CD14-positive monocyte (primary cell): ENCODE measurements at regions of chr19 and their contacts with region 1.

Region 1: GRCh38 chr19:55624109-55625003 is at the start of gene ZNF784:
- DNase-seq: peak; percentile 88 to 94 (median 91)
- H3K4me3 ChIP-seq: peak within 1 kb of the TSS; percentile 54 to 85 (median 63)
- H3K4me3 Mint-ChIP-seq: peak within 1 kb of the TSS; percentile 85 to 94
- H3K27ac ChIP-seq: peak within 1 kb of the TSS; percentile 78 to 86
- H3K27ac Mint-ChIP-seq: peak within 1 kb of the TSS; percentile 91 to 99 (median 98)
- H3K4me1 ChIP-seq: peaks cover 45 to 54% of the 10 kb centered on the region in 2 donors
- H3K4me1 Mint-ChIP-seq: peaks cover 40% of the 10 kb centered on the region
- H3K27me3 ChIP-seq: no peaks in the 10 kb centered on the region
- H3K27me3 Mint-ChIP-seq: peaks cover 0 to 8% (median 1%) of the 10 kb centered on the region in 3 donors
- CTCF ChIP-seq: no peak
- polyA plus RNA-seq, gene ZNF784: 1.5 to 5.5 (median 2.4) TPM

Region 2: GRCh38 chr19:55553217-55554182 is 70.9 kb before region 1 on chr19:
- intact Hi-C with region 1: no loop called
- DNase-seq: no peak
- H3K4me3 ChIP-seq: no peak overlapping the region
- H3K4me3 Mint-ChIP-seq: peak overlapping the region in 1 of 2 donors; percentile 7
- H3K27ac ChIP-seq: no peak overlapping the region
- H3K27ac Mint-ChIP-seq: no peak overlapping the region
- H3K4me1 ChIP-seq: no peaks in the 10 kb centered on the region
- H3K4me1 Mint-ChIP-seq: peaks cover 2% of the 10 kb centered on the region
- H3K27me3 ChIP-seq: no peaks in the 10 kb centered on the region
- H3K27me3 Mint-ChIP-seq: peaks cover 2 to 9% (median 7%) of the 10 kb centered on the region in 3 donors
- CTCF ChIP-seq: no peak

Region 3: GRCh38 chr19:55586976-55587668 is 37.2 kb before region 1 on chr19:
- intact Hi-C with region 1: loop called in 1 of 2 experiments (anchors 5 kb)
- DNase-seq: peak; percentile 84 to 85 (median 84)
- H3K4me3 ChIP-seq: peak overlapping the region in 2 of 3 experiments; percentile 24 to 75
- H3K4me3 Mint-ChIP-seq: peak overlapping the region; percentile 76 to 92
- H3K27ac ChIP-seq: no peak overlapping the region
- H3K27ac Mint-ChIP-seq: peak overlapping the region in 2 of 7 donors; percentile 45 to 50
- H3K4me1 ChIP-seq: peaks cover 10 to 21% of the 10 kb centered on the region in 2 donors
- H3K4me1 Mint-ChIP-seq: peaks cover 20% of the 10 kb centered on the region
- H3K27me3 ChIP-seq: peaks cover 9 to 29% of the 10 kb centered on the region in 2 donors
- H3K27me3 Mint-ChIP-seq: peaks cover 25 to 37% (median 34%) of the 10 kb centered on the region in 3 donors
- CTCF ChIP-seq: no peak